ENCODE measurements at regions of chr4 and their contacts with region 1.

Region 1: GRCh38 chr4:14289708-14290107 is 662.2 kb upstream of the BOD1L1 start:
- DNase-seq: no peak
- ATAC-seq: no peak
- H3K4me3 ChIP-seq: no peak overlapping the region
- H3K4me3 Mint-ChIP-seq: no peak overlapping the region
- H3K27ac ChIP-seq: no peak overlapping the region
- H3K27ac Mint-ChIP-seq: no peak overlapping the region
- H3K4me1 ChIP-seq: no peaks in the 10 kb centered on the region
- H3K4me1 Mint-ChIP-seq: no peaks in the 10 kb centered on the region
- H3K27me3 ChIP-seq: no peaks in the 10 kb centered on the region
- H3K27me3 Mint-ChIP-seq: peaks cover 2% of the 10 kb centered on the region
- CTCF ChIP-seq: no peak

Region 2: GRCh38 chr4:12926189-12927066 is 1363.3 kb before region 1 on chr4:
- CTCF ChIA-PET with region 1: no interaction called
- POLR2A ChIA-PET with region 1: no interaction called
- intact Hi-C with region 1: no loop called
- DNase-seq: no peak
- ATAC-seq: no peak
- H3K4me3 ChIP-seq: no peak overlapping the region
- H3K4me3 Mint-ChIP-seq: no peak overlapping the region
- H3K27ac ChIP-seq: no peak overlapping the region
- H3K27ac Mint-ChIP-seq: no peak overlapping the region
- H3K4me1 ChIP-seq: no peaks in the 10 kb centered on the region
- H3K4me1 Mint-ChIP-seq: no peaks in the 10 kb centered on the region
- H3K27me3 ChIP-seq: no peaks in the 10 kb centered on the region
- H3K27me3 Mint-ChIP-seq: no peaks in the 10 kb centered on the region
- CTCF ChIP-seq: no peak

Region 3: DNA sequence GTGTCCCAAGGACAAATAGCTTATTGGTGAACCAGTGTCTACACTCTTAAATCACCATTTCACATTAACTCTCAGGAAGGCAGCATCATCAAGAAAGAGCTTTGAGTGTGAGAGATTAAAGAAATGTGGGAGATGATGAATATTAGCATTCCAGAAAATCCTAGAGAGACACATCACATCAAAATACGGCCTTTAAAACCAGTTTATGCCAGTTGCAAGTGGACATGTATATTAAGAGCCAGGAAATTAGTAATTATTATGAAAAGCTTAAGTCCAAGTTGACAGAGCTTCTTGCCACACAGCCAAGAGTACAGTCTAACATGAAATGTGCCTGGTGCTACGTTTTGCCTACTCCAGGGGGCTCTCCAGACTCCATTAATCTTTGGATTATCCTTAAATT is 159.2 kb before region 1 on chr4:
- CTCF ChIA-PET with region 1: no interaction called
- POLR2A ChIA-PET with region 1: no interaction called
- intact Hi-C with region 1: loop called in 1 of 2 experiments (anchors 10 kb)
- DNase-seq: no peak
- ATAC-seq: no peak
- H3K4me3 ChIP-seq: no peak overlapping the region
- H3K4me3 Mint-ChIP-seq: no peak overlapping the region
- H3K27ac ChIP-seq: no peak overlapping the region
- H3K27ac Mint-ChIP-seq: no peak overlapping the region
- H3K4me1 ChIP-seq: no peaks in the 10 kb centered on the region
- H3K4me1 Mint-ChIP-seq: no peaks in the 10 kb centered on the region
- H3K27me3 ChIP-seq: no peaks in the 10 kb centered on the region
- H3K27me3 Mint-ChIP-seq: peaks cover 2% of the 10 kb centered on the region
- CTCF ChIP-seq: no peak